Caco-2 (cell line): ENCODE measurements at regions of chr1 and their contacts with region 1.

Region 1: DNA sequence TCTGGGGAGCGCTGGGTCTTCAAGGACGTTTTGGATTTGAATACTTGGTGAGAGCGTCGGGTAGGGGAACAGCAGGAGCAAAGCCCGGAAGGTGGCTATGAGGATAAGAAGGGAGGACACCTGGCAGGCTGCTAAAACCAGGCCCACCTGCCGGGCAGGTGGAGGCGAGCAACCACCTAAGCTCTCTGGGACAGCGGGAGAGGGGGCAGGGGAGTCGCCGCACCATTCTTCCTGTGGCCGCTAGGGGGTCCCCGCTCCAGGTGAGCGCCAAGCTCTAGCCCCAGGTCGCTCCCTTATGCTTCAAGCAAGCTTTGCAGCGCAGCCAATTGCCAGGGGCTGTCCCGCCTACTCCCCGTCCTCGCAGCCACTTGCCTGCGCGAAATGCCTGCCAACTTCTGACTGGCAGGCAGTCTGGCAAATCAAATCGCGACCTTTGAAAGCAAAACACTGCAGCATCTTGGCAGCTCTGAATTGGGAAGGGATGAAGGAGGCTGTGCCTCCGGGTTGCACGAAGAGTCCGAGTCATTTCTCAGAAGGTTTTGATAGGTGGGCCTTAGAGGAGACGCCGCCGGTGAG is at the start of gene NIPAL3:
- DNase-seq: peak; percentile 98
- H3K4me3 ChIP-seq: peak within 1 kb of the TSS; percentile 65
- H3K4me3 Mint-ChIP-seq: peak within 1 kb of the TSS; percentile 96
- H3K27ac Mint-ChIP-seq: peak within 1 kb of the TSS; percentile 94
- H3K4me1 ChIP-seq: peaks cover 15% of the 10 kb centered on the region
- H3K4me1 Mint-ChIP-seq: peaks cover 24% of the 10 kb centered on the region
- H3K27me3 ChIP-seq: no peaks in the 10 kb centered on the region
- H3K27me3 Mint-ChIP-seq: no peaks in the 10 kb centered on the region
- CTCF ChIP-seq: peak; percentile 86 to 89
- total RNA-seq, gene NIPAL3: 9.2 and 9.7 TPM in 2 replicates

Region 2: GRCh38 chr1:24266398-24266941 is 149.0 kb before region 1 on chr1:
- CTCF ChIA-PET with region 1: no interaction called
- POLR2A ChIA-PET with region 1: no interaction called
- intact Hi-C with region 1: no loop called
- DNase-seq: peak; percentile 30 to 73
- H3K4me3 ChIP-seq: no peak overlapping the region
- H3K4me3 Mint-ChIP-seq: no peak overlapping the region
- H3K27ac Mint-ChIP-seq: no peak overlapping the region
- H3K4me1 ChIP-seq: no peaks in the 10 kb centered on the region
- H3K4me1 Mint-ChIP-seq: no peaks in the 10 kb centered on the region
- H3K27me3 ChIP-seq: no peaks in the 10 kb centered on the region
- H3K27me3 Mint-ChIP-seq: no peaks in the 10 kb centered on the region
- CTCF ChIP-seq: no peak

Region 3: GRCh38 chr1:24502709-24503058 is 87.3 kb after region 1 on chr1 and contains the start of gene RCAN3:
- CTCF ChIA-PET with region 1: interaction called, 7 read pairs
- POLR2A ChIA-PET with region 1: interaction called, 9 read pairs
- intact Hi-C with region 1: loop called (anchors 2 kb)
- DNase-seq: peak; percentile 82 to 91
- H3K4me3 ChIP-seq: peak within 1 kb of the TSS; percentile 73
- H3K4me3 Mint-ChIP-seq: peak within 1 kb of the TSS; percentile 84
- H3K27ac Mint-ChIP-seq: peak within 1 kb of the TSS; percentile 83
- H3K4me1 ChIP-seq: peaks cover 5% of the 10 kb centered on the region; the same call in 1 of the 2 replicates
- H3K4me1 Mint-ChIP-seq: peaks cover 7% of the 10 kb centered on the region
- H3K27me3 ChIP-seq: no peaks in the 10 kb centered on the region
- H3K27me3 Mint-ChIP-seq: no peaks in the 10 kb centered on the region
- CTCF ChIP-seq: no peak
- total RNA-seq, gene RCAN3: 9.9 and 10.2 TPM in 2 replicates

Region 4: DNA sequence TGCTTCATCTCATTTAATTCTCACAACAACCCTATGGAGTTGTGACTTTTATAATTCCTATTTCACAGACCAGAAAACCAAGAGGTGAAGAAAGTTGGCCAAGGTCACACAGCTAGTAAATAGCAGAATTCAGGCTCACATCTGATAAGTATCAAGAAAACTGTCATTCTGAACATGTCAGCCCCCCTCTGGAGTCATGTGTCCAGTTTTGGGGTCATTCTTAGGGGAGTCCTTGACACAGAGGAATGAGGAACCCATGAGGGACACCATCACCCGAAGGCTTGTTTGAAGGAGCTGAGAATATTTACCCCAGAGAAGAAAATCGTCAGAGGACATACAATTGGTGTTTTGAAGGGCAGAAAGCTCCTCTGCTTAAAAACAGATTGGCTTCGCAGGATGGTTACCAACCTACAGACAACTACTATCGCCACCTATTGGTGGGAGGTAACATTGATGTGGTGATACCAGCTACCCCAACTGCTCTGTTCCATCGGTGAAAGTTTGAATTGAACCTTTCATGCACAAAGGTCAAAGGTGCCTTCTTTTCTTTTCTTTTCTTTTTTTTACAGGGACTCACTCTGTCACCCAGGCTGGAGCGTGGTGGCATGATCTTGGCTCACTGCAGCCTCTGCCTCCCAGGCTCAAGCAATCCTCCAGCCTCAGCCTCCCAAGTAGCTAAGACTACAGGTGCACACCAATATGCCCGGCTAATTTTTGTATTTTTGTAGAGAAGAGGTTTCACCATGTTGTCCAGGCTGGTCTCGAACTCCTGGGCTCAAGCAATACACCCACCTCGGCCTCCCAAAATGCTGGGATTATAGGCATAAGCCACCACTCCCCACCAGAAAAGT is 171.8 kb after region 1 on chr1:
- CTCF ChIA-PET with region 1: interaction called, 29 read pairs
- POLR2A ChIA-PET with region 1: interaction called, 3 read pairs
- intact Hi-C with region 1: loop called (anchors 1 kb)
- DNase-seq: peak; percentile 45 to 66
- H3K4me3 ChIP-seq: no peak overlapping the region
- H3K4me3 Mint-ChIP-seq: no peak overlapping the region
- H3K27ac Mint-ChIP-seq: no peak overlapping the region
- H3K4me1 ChIP-seq: no peaks in the 10 kb centered on the region
- H3K4me1 Mint-ChIP-seq: peaks cover 7% of the 10 kb centered on the region
- H3K27me3 ChIP-seq: no peaks in the 10 kb centered on the region
- H3K27me3 Mint-ChIP-seq: no peaks in the 10 kb centered on the region
- CTCF ChIP-seq: peak; percentile 46 to 70